ENCODE measurements at regions of chr13 and their contacts with region 1.

Region 1: DNA sequence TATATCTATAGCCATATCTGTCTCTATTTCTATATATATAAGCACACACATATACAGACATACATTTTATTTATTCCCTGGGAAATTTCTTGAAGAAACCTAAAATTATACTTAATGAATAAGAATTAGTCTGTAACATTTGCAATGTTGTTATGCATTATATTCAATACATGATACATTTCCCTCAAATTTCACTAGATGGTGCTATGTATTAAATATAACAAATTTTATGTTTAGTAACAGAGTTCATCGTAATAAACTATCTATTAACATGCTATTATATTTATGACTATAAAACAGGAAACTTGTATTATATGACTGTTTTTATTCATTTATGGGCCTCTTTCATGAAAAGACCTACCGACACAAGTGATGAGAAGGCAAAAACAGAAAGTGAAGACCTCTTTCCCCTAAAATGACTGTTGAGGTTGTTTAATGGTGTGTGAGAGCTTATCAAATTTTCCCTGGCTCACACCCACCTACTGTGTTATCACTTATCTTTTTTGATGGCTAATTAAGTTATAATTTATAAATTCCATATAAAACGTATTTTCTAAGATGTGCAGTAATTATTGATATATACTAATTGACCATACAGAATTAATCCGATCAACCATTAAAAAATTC is 881.9 kb downstream of the SLITRK6 start:
- DNase-seq: no peak
- ATAC-seq: no peak
- H3K4me3 Mint-ChIP-seq: no peak overlapping the region
- H3K27ac Mint-ChIP-seq: no peak overlapping the region
- H3K4me1 Mint-ChIP-seq: no peaks in the 10 kb centered on the region
- H3K27me3 Mint-ChIP-seq: no peaks in the 10 kb centered on the region

Region 2: GRCh38 chr13:84973661-84974060 is 56.3 kb after region 1 on chr13:
- CTCF ChIA-PET with region 1: no interaction called
- POLR2A ChIA-PET with region 1: no interaction called
- intact Hi-C with region 1: no loop called
- DNase-seq: no peak
- ATAC-seq: no peak
- H3K4me3 Mint-ChIP-seq: no peak overlapping the region
- H3K27ac Mint-ChIP-seq: no peak overlapping the region
- H3K4me1 Mint-ChIP-seq: no peaks in the 10 kb centered on the region
- H3K27me3 Mint-ChIP-seq: no peaks in the 10 kb centered on the region

Region 3: GRCh38 chr13:85806553-85807175 is 889.3 kb after region 1 on chr13:
- CTCF ChIA-PET with region 1: no interaction called
- POLR2A ChIA-PET with region 1: no interaction called
- intact Hi-C with region 1: loop called (anchors 2 to 5 kb)
- DNase-seq: no peak
- ATAC-seq: peak; percentile 42
- H3K4me3 Mint-ChIP-seq: no peak overlapping the region
- H3K27ac Mint-ChIP-seq: no peak overlapping the region
- H3K4me1 Mint-ChIP-seq: no peaks in the 10 kb centered on the region
- H3K27me3 Mint-ChIP-seq: no peaks in the 10 kb centered on the region

Region 4: GRCh38 chr13:85828149-85828548 is 910.8 kb after region 1 on chr13:
- CTCF ChIA-PET with region 1: no interaction called
- POLR2A ChIA-PET with region 1: no interaction called
- intact Hi-C with region 1: loop called in 1 of 2 experiments (anchors 5 kb)
- DNase-seq: no peak
- ATAC-seq: no peak
- H3K4me3 Mint-ChIP-seq: no peak overlapping the region
- H3K27ac Mint-ChIP-seq: no peak overlapping the region
- H3K4me1 Mint-ChIP-seq: no peaks in the 10 kb centered on the region
- H3K27me3 Mint-ChIP-seq: no peaks in the 10 kb centered on the region

Measured in activated CD4-positive, alpha-beta T cell treated with anti-CD3 and anti-CD28 coated beads for 36 hours (primary cell).